RWPE1 (cell line): ENCODE measurements at regions of chr3 and their contacts with region 1.

Region 1: DNA sequence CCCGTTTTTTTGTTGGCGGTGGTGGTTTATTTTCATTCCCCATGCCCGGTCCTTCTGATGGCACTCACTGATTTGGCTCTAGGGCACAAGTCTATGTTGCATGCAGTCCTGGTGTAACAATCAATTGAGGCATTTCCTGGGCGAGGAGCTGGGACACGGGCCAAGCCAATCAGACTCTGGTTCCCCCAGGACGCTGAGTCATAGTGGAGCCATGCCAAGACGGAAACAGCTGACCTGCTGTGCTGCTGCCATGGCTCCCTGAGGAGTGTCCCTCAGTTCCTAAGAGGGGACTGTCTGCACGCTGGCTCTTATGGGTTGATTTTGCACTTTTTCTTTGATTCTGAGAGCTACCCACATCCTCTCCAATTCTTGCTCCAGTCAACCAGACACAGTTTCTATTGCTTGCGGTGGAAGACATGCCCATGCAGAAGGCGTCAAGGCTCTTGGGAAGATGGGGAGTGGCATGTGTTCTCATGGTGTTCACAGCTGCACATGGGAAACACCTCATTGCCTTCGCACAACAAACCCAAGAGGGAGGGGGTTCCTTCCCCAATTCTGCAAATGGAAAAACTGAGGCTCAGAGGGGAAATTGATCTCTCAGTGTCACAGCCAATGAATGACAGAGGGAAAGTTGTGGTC is 28.4 kb upstream of the ALDH1L1 start:
- DNase-seq: peak; percentile 89
- H3K27ac ChIP-seq: peak overlapping the region; percentile 63
- CTCF ChIP-seq: no peak

Region 2: DNA sequence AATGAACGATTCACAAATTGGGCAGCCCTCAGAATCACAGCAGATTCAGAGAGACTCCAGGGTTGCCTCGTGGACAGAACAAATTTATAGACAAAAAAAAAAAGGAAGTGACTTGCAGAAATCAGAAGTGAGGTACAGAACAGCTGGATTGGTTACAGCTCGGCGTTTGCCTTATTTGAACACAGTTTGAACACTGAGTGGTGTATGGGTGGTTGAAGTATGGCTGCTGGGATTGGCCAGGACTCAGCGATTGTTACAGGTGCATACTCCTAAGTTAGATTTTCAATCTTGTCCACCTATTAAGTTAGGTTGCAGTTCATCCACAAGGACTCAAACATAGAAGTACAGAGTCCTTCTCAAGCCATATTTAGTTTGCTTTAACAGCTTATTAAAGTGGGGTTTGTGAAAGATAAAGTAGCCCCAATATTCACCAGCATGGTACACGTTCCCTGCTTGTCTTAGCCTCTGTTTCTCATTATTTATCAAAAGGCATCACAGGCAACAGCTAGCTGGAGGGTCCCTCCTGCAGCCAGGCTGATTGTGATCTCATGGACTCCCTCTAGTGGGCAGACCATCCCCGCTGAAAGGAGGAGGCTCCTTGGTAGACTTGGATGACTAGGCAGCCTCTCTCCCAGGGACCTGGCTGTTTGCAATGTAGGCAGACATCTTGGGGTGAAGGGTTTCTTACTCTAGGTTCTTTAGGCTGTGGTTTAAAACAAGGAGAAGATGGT is 10.7 kb before region 1 on chr3:
- CTCF ChIA-PET with region 1: interaction called, 11 read pairs
- POLR2A ChIA-PET with region 1: no interaction called
- DNase-seq: peak; percentile 65
- H3K27ac ChIP-seq: no peak overlapping the region
- CTCF ChIP-seq: peak; percentile 71